Dendritic cell treated with granulocyte-macrophage colony-stimulating factor and Interleukin-4, amounts not matched to agents 40 ng/mL and 50 ng/mL, for 4 days (primary cell): ENCODE measurements at regions of chr11 and their contacts with region 1.

Region 1: DNA sequence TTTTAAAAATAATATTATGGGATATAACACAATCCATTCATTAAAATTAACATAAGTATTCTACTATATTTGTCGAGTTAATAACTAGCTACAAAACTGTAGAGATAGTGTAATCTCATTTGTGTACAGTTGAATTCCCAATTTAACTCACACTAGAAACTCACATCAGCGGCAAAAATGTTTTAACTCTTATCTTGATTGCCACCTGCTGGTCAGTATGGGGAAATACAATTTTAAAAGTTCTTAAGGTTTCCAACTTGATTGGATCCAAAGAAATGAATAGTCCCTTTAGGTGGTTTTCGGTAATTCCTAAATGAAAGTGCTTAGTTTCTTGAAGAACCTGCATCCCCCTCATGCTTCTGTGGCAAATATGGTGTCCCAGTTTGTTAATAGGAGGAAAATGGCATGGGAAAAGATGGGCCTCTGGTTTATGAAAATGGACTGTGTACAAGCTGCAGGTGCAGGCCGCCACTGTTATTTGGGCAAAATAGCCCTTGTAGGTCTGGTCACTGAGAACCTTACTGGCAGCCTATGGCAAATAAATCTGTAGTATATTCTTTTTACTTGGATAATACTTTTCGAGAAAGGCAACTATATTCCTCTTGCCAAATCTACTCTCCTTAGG is 33.7 kb upstream of the SLC17A6 start:
- H3K4me3 Mint-ChIP-seq: no peak overlapping the region
- H3K27ac Mint-ChIP-seq: no peak overlapping the region
- H3K4me1 Mint-ChIP-seq: peaks cover 6% of the 10 kb centered on the region
- H3K27me3 Mint-ChIP-seq: peaks cover 5% of the 10 kb centered on the region

Region 2: GRCh38 chr11:20647976-20648565 is 1656.4 kb before region 1 on chr11:
- intact Hi-C with region 1: loop called (anchors 5 kb)
- H3K4me3 Mint-ChIP-seq: no peak overlapping the region
- H3K27ac Mint-ChIP-seq: no peak overlapping the region
- H3K4me1 Mint-ChIP-seq: no peaks in the 10 kb centered on the region
- H3K27me3 Mint-ChIP-seq: no peaks in the 10 kb centered on the region

Region 3: DNA sequence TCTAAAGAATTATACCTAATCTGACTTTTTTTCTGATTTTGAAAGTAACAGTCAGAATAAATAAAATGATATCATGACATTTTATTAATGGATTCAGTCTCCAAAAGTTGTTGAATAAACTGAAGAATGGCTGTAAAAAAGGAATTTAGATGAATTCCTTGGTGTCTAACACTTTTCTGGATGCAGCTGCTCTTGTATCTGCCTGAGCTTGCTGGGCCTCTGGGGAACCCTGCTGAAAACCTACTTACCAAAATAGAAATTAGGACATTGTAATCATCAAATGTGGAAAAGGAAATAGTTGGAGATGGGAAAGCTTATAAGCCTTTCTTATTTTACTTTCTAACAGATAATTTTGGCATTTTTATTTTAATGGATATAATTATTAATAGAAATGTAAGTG is 427.3 kb before region 1 on chr11:
- intact Hi-C with region 1: loop called (anchors 10 kb)
- H3K4me3 Mint-ChIP-seq: no peak overlapping the region
- H3K27ac Mint-ChIP-seq: no peak overlapping the region
- H3K4me1 Mint-ChIP-seq: peaks cover 5% of the 10 kb centered on the region
- H3K27me3 Mint-ChIP-seq: no peaks in the 10 kb centered on the region

Region 4: GRCh38 chr11:22169833-22170232 is 134.6 kb before region 1 on chr11:
- intact Hi-C with region 1: loop called (anchors 1 kb)
- H3K4me3 Mint-ChIP-seq: no peak overlapping the region
- H3K27ac Mint-ChIP-seq: no peak overlapping the region
- H3K4me1 Mint-ChIP-seq: peaks cover 5% of the 10 kb centered on the region
- H3K27me3 Mint-ChIP-seq: no peaks in the 10 kb centered on the region

Region 5: GRCh38 chr11:22244986-22245592 is 59.4 kb before region 1 on chr11:
- intact Hi-C with region 1: loop called (anchors 1 kb)
- H3K4me3 Mint-ChIP-seq: no peak overlapping the region
- H3K27ac Mint-ChIP-seq: no peak overlapping the region
- H3K4me1 Mint-ChIP-seq: no peaks in the 10 kb centered on the region
- H3K27me3 Mint-ChIP-seq: no peaks in the 10 kb centered on the region

Region 6: DNA sequence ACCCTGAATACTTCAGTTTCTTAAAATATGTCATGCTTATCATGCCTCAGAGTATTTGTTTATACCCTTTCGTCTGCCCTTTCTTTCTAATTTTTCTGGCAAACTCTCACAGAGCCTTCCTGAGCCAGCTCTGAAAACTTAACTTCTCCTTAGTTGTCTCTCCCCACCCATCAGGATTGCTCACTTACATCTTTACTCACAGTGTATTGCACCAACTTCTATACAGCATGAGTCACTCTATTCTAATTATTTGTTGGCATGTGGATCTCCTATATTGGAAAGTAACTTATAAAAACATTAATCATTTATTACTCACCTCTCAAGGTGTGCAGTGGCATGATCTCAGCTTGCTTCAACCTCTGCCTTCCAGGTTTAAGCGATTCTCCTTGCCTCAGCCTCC is 206.3 kb after region 1 on chr11:
- intact Hi-C with region 1: no loop called
- H3K4me3 Mint-ChIP-seq: no peak overlapping the region
- H3K27ac Mint-ChIP-seq: no peak overlapping the region
- H3K4me1 Mint-ChIP-seq: no peaks in the 10 kb centered on the region
- H3K27me3 Mint-ChIP-seq: no peaks in the 10 kb centered on the region